CD4-positive, alpha-beta memory T cell (primary cell): ENCODE measurements at regions of chr6 and their contacts with region 1.

Region 1: DNA sequence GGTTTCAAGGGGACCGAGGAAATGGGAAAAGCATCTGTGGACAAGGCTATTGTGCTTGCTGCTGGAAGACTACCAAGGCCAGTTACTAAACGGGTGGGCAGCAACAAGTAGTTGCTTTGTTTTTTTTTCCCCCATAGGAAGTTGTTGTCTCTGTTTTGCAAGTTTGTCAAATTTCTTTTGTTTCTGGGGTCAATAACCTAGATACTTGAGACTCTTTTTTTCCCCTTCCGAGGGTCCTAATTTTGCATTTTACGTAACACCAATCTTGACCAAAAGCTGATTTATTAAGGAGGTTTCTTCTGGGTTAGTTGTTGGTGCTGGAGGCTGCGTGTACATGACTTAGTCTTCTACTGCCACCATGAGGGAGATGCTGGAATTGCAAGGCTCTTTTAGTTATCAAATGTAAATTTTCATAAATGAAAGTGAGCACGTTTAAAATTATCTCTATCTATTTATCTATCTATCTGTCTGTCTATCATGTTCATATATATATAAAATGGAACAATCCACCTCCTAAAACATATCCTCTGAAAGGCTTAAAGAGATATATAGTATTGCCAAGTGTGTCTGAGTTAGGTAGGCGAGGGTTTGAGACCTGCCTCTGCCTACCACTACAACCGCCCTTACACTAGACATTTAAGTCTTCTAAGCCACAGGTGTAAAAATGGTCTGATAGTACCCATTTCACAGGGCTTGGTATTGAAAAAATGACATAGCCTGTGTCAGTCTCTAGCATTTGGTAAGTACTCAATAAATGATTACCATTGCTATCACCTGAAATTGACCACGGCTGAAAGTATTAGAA is 60.2 kb downstream of the GCLC start:
- DNase-seq: peak; percentile 64 to 71 (median 68)
- H3K4me3 ChIP-seq: no peak overlapping the region
- H3K4me3 Mint-ChIP-seq: no peak overlapping the region
- H3K27ac ChIP-seq: no peak overlapping the region
- H3K27ac Mint-ChIP-seq: no peak overlapping the region
- H3K4me1 ChIP-seq: no peaks in the 10 kb centered on the region
- H3K4me1 Mint-ChIP-seq: peaks cover 5 to 15% (median 8%) of the 10 kb centered on the region in 4 donors
- H3K27me3 ChIP-seq: peaks cover 4% of the 10 kb centered on the region
- H3K27me3 Mint-ChIP-seq: peaks cover 20 to 23% of the 10 kb centered on the region in 2 donors

Region 2: DNA sequence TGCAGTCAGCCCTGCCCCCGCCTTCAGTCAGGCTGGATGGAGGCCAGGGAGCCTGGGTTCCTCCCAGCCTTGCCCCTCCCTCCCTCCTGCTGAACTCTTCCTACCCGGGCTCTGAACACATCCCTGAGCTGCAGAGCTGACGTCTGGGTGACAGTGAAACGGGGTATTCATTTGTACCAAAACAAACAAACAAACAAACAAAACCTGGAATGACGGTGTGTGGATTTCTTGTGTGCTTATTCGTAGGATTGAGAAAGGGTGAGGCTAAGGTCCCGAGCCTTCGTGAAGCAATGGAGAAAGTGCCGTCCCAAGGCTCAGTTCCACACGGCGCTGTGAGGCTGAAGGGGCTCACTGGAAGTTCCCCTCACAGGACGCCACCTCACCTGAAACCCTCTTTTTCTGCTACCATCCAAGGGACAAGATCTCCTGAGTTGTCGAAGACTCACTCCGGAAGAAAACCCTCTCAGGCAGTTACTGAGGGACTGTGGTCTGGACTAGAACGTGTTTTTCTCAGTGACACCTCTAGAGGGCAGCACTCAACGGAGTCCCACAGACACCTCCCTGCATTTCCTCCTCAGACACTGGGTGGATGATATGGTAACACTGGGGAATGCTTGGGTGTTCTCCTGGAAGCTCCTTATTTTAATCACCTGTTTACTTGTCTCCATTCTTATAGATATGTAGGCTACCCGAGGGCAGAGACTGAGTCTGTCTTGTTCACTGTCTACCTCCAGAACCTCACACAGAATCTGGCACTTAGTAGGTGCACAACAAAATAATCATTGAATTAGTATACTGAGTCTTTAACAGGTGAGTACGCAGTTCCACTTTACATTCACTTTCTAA is 602.5 kb before region 1 on chr6:
- CTCF ChIA-PET with region 1: no interaction called
- POLR2A ChIA-PET with region 1: no interaction called
- intact Hi-C with region 1: loop called (anchors 5 kb)
- DNase-seq: peak; percentile 64 to 70 (median 66)
- H3K4me3 ChIP-seq: peak overlapping the region; percentile 37 to 53
- H3K4me3 Mint-ChIP-seq: peak overlapping the region; percentile 82 to 94 (median 86)
- H3K27ac ChIP-seq: no peak overlapping the region
- H3K27ac Mint-ChIP-seq: peak overlapping the region in 4 of 7 donors; percentile 48 to 88 (median 61)
- H3K4me1 ChIP-seq: no peaks in the 10 kb centered on the region
- H3K4me1 Mint-ChIP-seq: peaks cover 0 to 6% (median 5%) of the 10 kb centered on the region in 4 donors
- H3K27me3 ChIP-seq: no peaks in the 10 kb centered on the region
- H3K27me3 Mint-ChIP-seq: no peaks in the 10 kb centered on the region

Region 3: GRCh38 chr6:53171605-53172446 is 312.9 kb before region 1 on chr6:
- CTCF ChIA-PET with region 1: interaction called, 167 read pairs
- POLR2A ChIA-PET with region 1: no interaction called
- intact Hi-C with region 1: loop called (anchors 1 kb)
- DNase-seq: peak; percentile 83 to 90 (median 85)
- H3K4me3 ChIP-seq: no peak overlapping the region
- H3K4me3 Mint-ChIP-seq: no peak overlapping the region
- H3K27ac ChIP-seq: no peak overlapping the region
- H3K27ac Mint-ChIP-seq: no peak overlapping the region
- H3K4me1 ChIP-seq: no peaks in the 10 kb centered on the region
- H3K4me1 Mint-ChIP-seq: no peaks in the 10 kb centered on the region
- H3K27me3 ChIP-seq: no peaks in the 10 kb centered on the region
- H3K27me3 Mint-ChIP-seq: no peaks in the 10 kb centered on the region

Region 4: DNA sequence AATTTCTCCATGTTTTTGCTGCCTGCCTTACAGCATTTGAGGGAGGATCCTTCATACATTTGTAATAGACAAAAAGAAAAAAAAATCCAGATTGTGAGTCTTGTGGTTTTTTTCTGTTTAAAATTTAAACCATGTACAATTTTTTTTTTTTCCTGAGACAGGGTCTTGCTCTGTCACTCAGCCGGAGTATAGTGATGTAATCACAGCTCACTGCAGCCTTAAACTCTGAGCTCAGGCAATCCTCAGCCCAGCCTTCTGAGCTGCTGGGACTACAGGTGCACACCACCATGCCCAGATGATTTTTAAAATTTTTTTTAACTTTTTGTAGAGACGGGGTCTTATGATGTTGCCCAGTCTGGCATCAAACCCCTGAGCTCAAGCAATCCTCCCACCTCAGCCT is 36.8 kb before region 1 on chr6:
- CTCF ChIA-PET with region 1: interaction called, 11 read pairs
- POLR2A ChIA-PET with region 1: no interaction called
- intact Hi-C with region 1: no loop called
- DNase-seq: no peak
- H3K4me3 ChIP-seq: no peak overlapping the region
- H3K4me3 Mint-ChIP-seq: no peak overlapping the region
- H3K27ac ChIP-seq: no peak overlapping the region
- H3K27ac Mint-ChIP-seq: no peak overlapping the region
- H3K4me1 ChIP-seq: no peaks in the 10 kb centered on the region
- H3K4me1 Mint-ChIP-seq: no peaks in the 10 kb centered on the region
- H3K27me3 ChIP-seq: no peaks in the 10 kb centered on the region
- H3K27me3 Mint-ChIP-seq: peaks cover 0 to 4% of the 10 kb centered on the region in 2 donors

Region 5: GRCh38 chr6:53734473-53735299 is 250.0 kb after region 1 on chr6:
- CTCF ChIA-PET with region 1: interaction called, 12 read pairs
- POLR2A ChIA-PET with region 1: no interaction called
- intact Hi-C with region 1: no loop called
- DNase-seq: peak in 1 of 5 donors; percentile 14
- H3K4me3 ChIP-seq: no peak overlapping the region
- H3K4me3 Mint-ChIP-seq: peak overlapping the region in 1 of 8 donors; percentile 29
- H3K27ac ChIP-seq: no peak overlapping the region
- H3K27ac Mint-ChIP-seq: peak overlapping the region in 1 of 7 donors; percentile 16
- H3K4me1 ChIP-seq: peaks cover 26% of the 10 kb centered on the region
- H3K4me1 Mint-ChIP-seq: peaks cover 11 to 25% (median 22%) of the 10 kb centered on the region in 4 donors
- H3K27me3 ChIP-seq: no peaks in the 10 kb centered on the region
- H3K27me3 Mint-ChIP-seq: peaks cover 0 to 9% of the 10 kb centered on the region in 2 donors